ENCODE measurements at regions of chr1 and their contacts with region 1.

Region 1: GRCh38 chr1:246450611-246451251 is 56.3 kb downstream of the SMYD3 start:
- DNase-seq: no peak
- ATAC-seq: peak; percentile 85
- H3K4me3 ChIP-seq: no peak overlapping the region
- H3K27ac ChIP-seq: no peak overlapping the region
- H3K4me1 ChIP-seq: no peaks in the 10 kb centered on the region
- H3K27me3 ChIP-seq: no peaks in the 10 kb centered on the region
- CTCF ChIP-seq: peak; percentile 56 to 82 (median 65); a peak in 4 of 6 replicates
- EP300 ChIP-seq: no peak
- POLR2A ChIP-seq: no peak
- RAD21 ChIP-seq: peak; percentile 90

Region 2: GRCh38 chr1:246012341-246012740 is 438.4 kb before region 1 on chr1:
- CTCF ChIA-PET with region 1: interaction called, 31 read pairs
- POLR2A ChIA-PET with region 1: no interaction called
- RAD21 ChIA-PET with region 1: interaction called, 7 read pairs
- SMC1A ChIA-PET with region 1: interaction called, 8 read pairs
- in situ Hi-C with region 1: loop called (anchors 5 kb)
- intact Hi-C with region 1: loop called (anchors 1 kb)
- DNase-seq: no peak
- ATAC-seq: peak; percentile 79
- H3K4me3 ChIP-seq: no peak overlapping the region
- H3K27ac ChIP-seq: no peak overlapping the region
- H3K4me1 ChIP-seq: no peaks in the 10 kb centered on the region
- H3K27me3 ChIP-seq: no peaks in the 10 kb centered on the region
- CTCF ChIP-seq: peak; percentile 57 to 64 (median 59); a peak in 5 of 6 replicates
- EP300 ChIP-seq: no peak
- POLR2A ChIP-seq: no peak
- RAD21 ChIP-seq: peak; percentile 79

Region 3: DNA sequence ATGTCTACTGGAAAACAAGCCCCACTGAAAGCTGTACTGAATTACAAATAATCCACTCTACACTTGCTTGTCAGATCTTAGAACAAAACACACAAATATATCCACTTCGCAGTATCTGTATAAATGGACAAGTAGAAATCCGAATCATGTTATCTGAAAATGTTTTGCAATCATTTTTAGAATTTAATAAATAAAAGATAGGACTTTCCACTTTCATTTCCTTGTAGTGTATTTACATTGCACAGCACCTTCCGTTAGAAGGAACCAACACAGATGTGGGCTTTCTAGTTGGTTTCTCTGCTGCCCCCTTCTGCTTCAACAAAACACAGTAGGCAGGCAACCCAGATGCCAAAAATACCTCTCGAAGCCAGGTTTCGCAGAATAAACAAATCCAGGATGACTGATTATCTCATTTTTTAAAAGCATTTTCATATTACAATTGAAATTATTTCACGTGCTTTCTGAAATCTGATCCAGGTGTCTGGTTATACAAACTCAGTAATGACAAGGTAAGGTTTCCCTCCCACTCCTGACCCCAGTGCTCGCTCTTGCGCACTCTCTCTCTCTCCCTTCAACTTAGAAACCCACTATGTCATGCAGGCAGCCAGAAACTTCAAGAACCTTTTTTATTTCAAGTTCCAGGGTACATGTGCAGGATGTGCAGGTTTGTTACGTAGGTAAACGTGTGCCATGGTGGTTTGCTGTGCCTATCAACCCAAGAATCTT is 333.5 kb before region 1 on chr1:
- CTCF ChIA-PET with region 1: interaction called, 5 read pairs
- POLR2A ChIA-PET with region 1: no interaction called
- RAD21 ChIA-PET with region 1: no interaction called
- SMC1A ChIA-PET with region 1: interaction called, 3 read pairs
- in situ Hi-C with region 1: no loop called
- intact Hi-C with region 1: loop called (anchors 2 kb)
- DNase-seq: peak; percentile 16
- ATAC-seq: peak; percentile 99
- H3K4me3 ChIP-seq: no peak overlapping the region; the same call in 1 of the 2 replicates
- H3K27ac ChIP-seq: no peak overlapping the region
- H3K4me1 ChIP-seq: no peaks in the 10 kb centered on the region
- H3K27me3 ChIP-seq: no peaks in the 10 kb centered on the region
- CTCF ChIP-seq: peak; percentile 43 to 51 (median 49)
- EP300 ChIP-seq: no peak
- POLR2A ChIP-seq: no peak
- RAD21 ChIP-seq: peak; percentile 53

Region 4: DNA sequence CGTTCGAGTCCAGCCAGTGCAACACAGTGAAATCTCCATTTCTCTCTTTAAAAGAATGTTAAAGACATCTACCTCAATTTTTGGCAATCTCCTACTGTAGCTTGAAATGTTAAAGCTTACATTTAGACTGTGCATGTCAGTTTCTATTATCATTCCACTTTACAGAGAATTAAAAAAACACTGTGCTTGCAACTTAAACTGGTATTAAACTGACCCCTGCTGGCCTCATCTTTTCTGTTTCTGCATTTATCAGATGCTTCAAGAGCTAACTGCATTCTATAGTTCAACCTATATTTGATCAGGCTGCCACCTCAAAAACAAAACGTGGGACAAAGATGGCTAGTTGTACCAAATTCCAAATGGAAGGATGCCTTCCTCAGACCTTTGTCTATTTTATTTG is 170.2 kb before region 1 on chr1:
- CTCF ChIA-PET with region 1: interaction called, 6 read pairs
- POLR2A ChIA-PET with region 1: no interaction called
- RAD21 ChIA-PET with region 1: no interaction called
- SMC1A ChIA-PET with region 1: interaction called, 3 read pairs
- in situ Hi-C with region 1: no loop called
- intact Hi-C with region 1: loop called (anchors 5 kb)
- DNase-seq: no peak
- ATAC-seq: peak; percentile 62
- H3K4me3 ChIP-seq: no peak overlapping the region
- H3K27ac ChIP-seq: no peak overlapping the region
- H3K4me1 ChIP-seq: no peaks in the 10 kb centered on the region
- H3K27me3 ChIP-seq: no peaks in the 10 kb centered on the region
- CTCF ChIP-seq: peak in 1 of 3 experiments; percentile 20; a peak in 1 of 6 replicates
- EP300 ChIP-seq: no peak
- POLR2A ChIP-seq: no peak
- RAD21 ChIP-seq: peak; percentile 61

Region 5: GRCh38 chr1:246329900-246330299 is 120.8 kb before region 1 on chr1:
- CTCF ChIA-PET with region 1: interaction called, 3 read pairs
- POLR2A ChIA-PET with region 1: no interaction called
- RAD21 ChIA-PET with region 1: no interaction called
- SMC1A ChIA-PET with region 1: interaction called, 3 read pairs
- in situ Hi-C with region 1: no loop called
- intact Hi-C with region 1: loop called (anchors 5 kb)
- DNase-seq: peak; percentile 91
- ATAC-seq: peak; percentile 94
- H3K4me3 ChIP-seq: no peak overlapping the region
- H3K27ac ChIP-seq: no peak overlapping the region
- H3K4me1 ChIP-seq: peaks cover 16% of the 10 kb centered on the region
- H3K27me3 ChIP-seq: no peaks in the 10 kb centered on the region
- CTCF ChIP-seq: peak in 2 of 3 experiments; percentile 6 to 15; a peak in 2 of 6 replicates
- EP300 ChIP-seq: peak; percentile 85 to 90
- POLR2A ChIP-seq: no peak
- RAD21 ChIP-seq: no peak

Region 6: GRCh38 chr1:246416261-246416660 is 34.5 kb before region 1 on chr1:
- CTCF ChIA-PET with region 1: no interaction called
- POLR2A ChIA-PET with region 1: no interaction called
- RAD21 ChIA-PET with region 1: no interaction called
- SMC1A ChIA-PET with region 1: no interaction called
- in situ Hi-C with region 1: no loop called
- intact Hi-C with region 1: no loop called
- DNase-seq: no peak
- ATAC-seq: no peak
- H3K4me3 ChIP-seq: no peak overlapping the region
- H3K27ac ChIP-seq: no peak overlapping the region
- H3K4me1 ChIP-seq: no peaks in the 10 kb centered on the region
- H3K27me3 ChIP-seq: no peaks in the 10 kb centered on the region
- CTCF ChIP-seq: no peak
- EP300 ChIP-seq: no peak
- POLR2A ChIP-seq: no peak
- RAD21 ChIP-seq: no peak

Region 7: GRCh38 chr1:246506367-246506673 is 55.6 kb after region 1 on chr1:
- CTCF ChIA-PET with region 1: no interaction called
- POLR2A ChIA-PET with region 1: no interaction called
- RAD21 ChIA-PET with region 1: no interaction called
- SMC1A ChIA-PET with region 1: no interaction called
- in situ Hi-C with region 1: no loop called
- intact Hi-C with region 1: no loop called
- DNase-seq: no peak
- ATAC-seq: peak; percentile 51
- H3K4me3 ChIP-seq: peak overlapping the region; percentile 66
- H3K27ac ChIP-seq: no peak overlapping the region
- H3K4me1 ChIP-seq: peaks cover 4% of the 10 kb centered on the region; the same call in 1 of the 2 replicates
- H3K27me3 ChIP-seq: no peaks in the 10 kb centered on the region
- CTCF ChIP-seq: no peak
- EP300 ChIP-seq: no peak
- POLR2A ChIP-seq: no peak
- RAD21 ChIP-seq: no peak

Region 8: DNA sequence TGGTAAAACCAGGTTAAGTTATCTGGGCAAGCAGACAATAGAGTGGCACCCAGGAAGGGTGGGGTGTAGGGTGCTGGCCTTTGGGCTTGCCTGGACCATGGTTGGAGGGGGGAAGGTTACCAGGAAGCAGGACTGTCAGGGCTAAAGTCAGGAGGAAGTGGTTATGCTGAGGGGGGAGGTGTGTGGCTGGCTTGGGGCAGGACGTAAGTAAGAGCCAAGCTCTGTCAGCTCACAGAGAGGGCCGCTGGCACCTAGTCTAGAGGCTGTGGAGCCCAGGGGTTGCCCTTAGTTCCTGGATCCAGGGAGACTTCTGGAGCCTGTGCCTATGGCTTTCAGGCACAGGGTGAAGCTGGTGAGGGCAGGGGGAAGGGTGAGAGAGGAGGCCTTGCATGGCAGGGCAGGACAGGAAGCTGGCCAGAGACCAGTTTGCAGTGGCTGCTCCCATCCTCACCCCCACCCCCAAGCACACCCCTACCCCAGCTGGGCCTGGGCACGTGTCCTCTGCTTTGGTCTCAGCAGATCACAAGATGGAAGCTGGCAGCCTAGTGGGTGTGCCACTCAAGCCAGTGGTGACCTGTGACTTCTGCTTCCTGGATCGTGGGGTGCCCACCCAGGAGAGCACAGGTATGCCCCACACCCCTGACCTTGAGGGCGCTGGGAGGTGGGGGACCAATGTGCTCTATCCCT is 76.8 kb after region 1 on chr1:
- CTCF ChIA-PET with region 1: no interaction called
- POLR2A ChIA-PET with region 1: no interaction called
- RAD21 ChIA-PET with region 1: no interaction called
- SMC1A ChIA-PET with region 1: no interaction called
- in situ Hi-C with region 1: no loop called
- intact Hi-C with region 1: no loop called
- DNase-seq: no peak
- ATAC-seq: peak; percentile 69
- H3K4me3 ChIP-seq: no peak overlapping the region
- H3K27ac ChIP-seq: peak overlapping the region; percentile 44
- H3K4me1 ChIP-seq: peaks cover 8% of the 10 kb centered on the region; the same call in 1 of the 2 replicates
- H3K27me3 ChIP-seq: no peaks in the 10 kb centered on the region
- CTCF ChIP-seq: no peak
- EP300 ChIP-seq: no peak
- POLR2A ChIP-seq: peak; percentile 52
- RAD21 ChIP-seq: no peak

Measured in GM12878 (cell line).